ENCODE measurements at regions of chr2 and their contacts with region 1.

Region 1: DNA sequence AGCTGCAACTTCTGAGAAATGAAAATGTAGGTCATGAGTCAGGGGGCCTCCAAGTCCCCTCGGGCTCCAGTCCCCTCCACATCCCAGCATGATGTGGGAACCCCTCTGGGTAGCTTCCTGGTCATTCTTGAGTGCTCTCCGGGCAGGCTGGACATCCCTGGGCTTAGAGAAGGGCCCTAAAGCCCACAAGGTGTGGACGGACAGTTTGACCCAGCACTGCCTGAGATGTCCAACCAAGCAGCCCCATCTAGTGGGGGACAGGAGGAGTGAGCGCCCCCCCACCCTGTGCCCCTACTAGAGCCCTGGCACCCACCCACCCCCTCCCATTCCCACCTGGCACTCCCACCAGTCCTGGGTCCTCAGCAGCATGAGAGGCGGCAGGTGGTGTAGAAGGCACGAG is 46.0 kb downstream of the CYP27C1 start:
- DNase-seq: peak; percentile 28 to 55
- ATAC-seq: peak; percentile 63 to 82; a peak in 4 of 6 replicates
- H3K4me3 ChIP-seq: no peak overlapping the region
- H3K27ac ChIP-seq: peak overlapping the region in 1 of 2 experiments; percentile 42; a peak in 2 of 6 replicates
- H3K4me1 ChIP-seq: peaks cover 16% of the 10 kb centered on the region
- CTCF ChIP-seq: peak; percentile 44
- EP300 ChIP-seq: no peak
- POLR2A ChIP-seq: no peak
- RAD21 ChIP-seq: peak; percentile 64 to 71

Region 2: DNA sequence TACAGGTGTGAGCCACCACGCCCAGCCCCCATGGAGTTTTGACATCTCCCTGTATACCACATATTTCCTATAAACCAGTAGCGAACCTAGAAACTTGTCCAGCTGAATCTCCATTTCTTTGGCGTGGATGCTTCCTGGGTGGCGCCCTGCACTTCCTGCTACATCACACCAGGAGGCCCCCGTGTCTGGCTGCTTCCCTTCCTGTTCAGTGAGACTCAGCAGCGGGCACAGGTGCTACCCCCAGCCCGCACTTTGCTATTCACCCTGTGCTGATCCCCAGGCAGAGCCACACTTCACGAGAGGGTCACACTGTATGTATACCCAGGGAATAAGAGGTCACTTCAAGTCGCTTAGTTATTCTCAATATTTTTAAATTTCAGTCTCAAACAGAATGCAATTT is 11.0 kb after region 1 on chr2:
- CTCF ChIA-PET with region 1: interaction called, 14 read pairs
- POLR2A ChIA-PET with region 1: no interaction called
- DNase-seq: no peak
- ATAC-seq: peak in 1 of 2 experiments; percentile 44; a peak in 1 of 6 replicates
- H3K4me3 ChIP-seq: no peak overlapping the region
- H3K27ac ChIP-seq: no peak overlapping the region
- H3K4me1 ChIP-seq: no peaks in the 10 kb centered on the region
- CTCF ChIP-seq: no peak
- EP300 ChIP-seq: no peak
- POLR2A ChIP-seq: no peak
- RAD21 ChIP-seq: no peak

Region 3: GRCh38 chr2:127277028-127277427 is 102.9 kb after region 1 on chr2:
- CTCF ChIA-PET with region 1: no interaction called
- POLR2A ChIA-PET with region 1: no interaction called
- DNase-seq: no peak
- ATAC-seq: no peak
- H3K4me3 ChIP-seq: no peak overlapping the region
- H3K27ac ChIP-seq: no peak overlapping the region
- H3K4me1 ChIP-seq: no peaks in the 10 kb centered on the region
- CTCF ChIP-seq: no peak
- EP300 ChIP-seq: no peak
- POLR2A ChIP-seq: no peak
- RAD21 ChIP-seq: no peak

Measured in A549 (cell line).